ENCODE measurements at regions of chr15 and their contacts with region 1.

Region 1: DNA sequence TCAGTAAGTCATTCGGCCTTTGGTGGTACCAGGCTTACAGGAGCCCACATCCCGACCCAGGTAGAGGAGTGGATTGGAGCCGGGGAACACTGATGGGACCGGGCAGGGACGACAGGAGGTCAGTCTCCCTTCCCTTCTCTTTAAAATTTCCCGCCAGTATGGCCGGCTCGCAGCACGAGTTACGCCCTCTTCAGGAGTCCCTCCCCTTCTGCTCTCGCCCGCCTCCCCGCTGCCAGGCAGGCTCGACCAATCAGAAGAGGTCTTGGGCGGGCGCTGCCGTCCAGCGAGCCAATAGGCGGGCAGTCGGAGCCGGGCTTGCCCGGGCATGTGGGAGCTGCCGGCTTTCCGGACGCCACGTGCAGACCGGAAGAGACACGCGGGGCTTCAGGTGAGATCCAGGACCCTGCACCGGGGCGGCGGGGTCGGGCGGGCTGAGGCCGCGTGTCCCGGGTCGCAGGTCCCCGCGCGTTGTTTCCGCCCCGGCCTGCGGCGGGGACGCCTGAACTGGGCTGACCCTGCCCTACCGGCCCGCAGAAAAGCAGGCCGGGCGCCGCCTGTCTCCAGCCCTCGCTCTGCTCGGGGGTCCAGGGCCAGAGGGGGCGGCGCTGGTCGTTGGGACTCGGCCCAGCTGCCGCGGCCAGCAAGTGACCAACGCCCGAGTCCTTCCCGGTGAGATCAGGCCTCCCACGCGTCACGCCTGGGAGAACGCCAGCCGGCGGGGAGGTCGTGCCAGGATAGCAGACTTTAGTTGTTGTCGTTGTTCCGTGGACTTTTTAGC is at the start of gene AEN:
- DNase-seq: peak; percentile 100

Region 2: GRCh38 chr15:88467073-88467934 is 153.9 kb before region 1 on chr15 and contains the starts of genes MRPL46 and MRPS11:
- in situ Hi-C with region 1: loop called (anchors 10 kb)
- DNase-seq: peak; percentile 98